ENCODE measurements at regions of chr2 and their contacts with region 1.

Region 1: DNA sequence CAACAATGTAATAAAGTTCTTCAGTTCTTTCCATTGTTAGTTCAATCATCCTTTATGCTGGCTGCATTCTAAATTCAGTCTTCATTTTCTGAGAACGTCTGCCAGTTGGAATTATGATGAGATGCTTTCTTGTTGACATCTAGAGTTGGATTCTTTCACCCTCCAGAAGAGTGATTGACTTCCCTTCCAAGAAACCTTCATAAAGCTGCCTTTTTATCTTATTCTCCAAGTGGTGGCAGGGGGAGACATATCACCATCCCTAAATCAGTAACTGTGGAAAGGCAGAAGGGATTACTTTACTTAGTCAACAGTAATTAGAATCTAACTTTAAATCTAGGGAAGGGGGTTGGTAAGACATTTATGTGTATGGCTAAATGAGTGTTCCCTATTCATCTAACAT is 86.8 kb upstream of the GULP1 start:
- DNase-seq: no peak
- H3K4me3 ChIP-seq: no peak overlapping the region
- H3K27ac ChIP-seq: no peak overlapping the region
- H3K4me1 ChIP-seq: no peaks in the 10 kb centered on the region
- H3K27me3 ChIP-seq: no peaks in the 10 kb centered on the region
- CTCF ChIP-seq: no peak
- EP300 ChIP-seq: no peak
- POLR2A ChIP-seq: no peak

Region 2: GRCh38 chr2:187783444-187783843 is 421.4 kb before region 1 on chr2:
- in situ Hi-C with region 1: no loop called
- intact Hi-C with region 1: loop called (anchors 5 kb)
- DNase-seq: no peak
- H3K4me3 ChIP-seq: no peak overlapping the region
- H3K27ac ChIP-seq: no peak overlapping the region
- H3K4me1 ChIP-seq: no peaks in the 10 kb centered on the region
- H3K27me3 ChIP-seq: no peaks in the 10 kb centered on the region
- CTCF ChIP-seq: no peak
- EP300 ChIP-seq: no peak
- POLR2A ChIP-seq: no peak

Measured in transverse colon (tissue), 4 donors.